ENCODE measurements at regions of chr9 and their contacts with region 1.

Region 1: DNA sequence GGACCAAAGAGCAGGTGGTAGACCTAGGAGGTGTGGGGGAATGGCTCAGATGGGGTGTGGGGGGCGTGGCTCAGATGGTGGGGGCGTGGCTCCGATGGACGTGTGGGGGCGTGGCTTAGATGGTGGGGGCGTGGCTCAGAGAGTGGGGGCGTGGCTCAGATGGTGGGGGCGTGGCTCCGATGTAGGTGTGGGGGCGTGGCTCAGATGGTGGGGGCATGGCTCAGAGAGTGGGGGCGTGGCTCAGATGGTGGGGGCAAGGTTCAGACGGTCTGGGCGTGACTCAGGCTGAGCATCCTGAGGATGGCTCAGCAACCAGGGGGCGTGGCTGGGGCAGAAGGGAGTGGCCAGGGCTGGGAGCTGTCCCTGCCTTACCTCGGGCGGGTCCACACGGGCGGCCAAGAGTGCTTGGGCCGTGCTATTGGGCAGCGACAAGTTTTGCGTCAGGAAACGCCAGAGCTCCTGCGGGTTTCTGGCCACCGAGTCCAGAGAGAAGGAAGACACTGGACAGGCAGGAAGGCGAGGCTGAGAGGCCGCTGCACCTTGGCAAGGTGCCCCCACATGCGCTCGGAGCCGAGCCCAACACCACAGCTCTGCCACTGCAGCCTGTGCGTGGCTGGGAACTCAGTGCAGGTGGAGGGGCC is 5.9 kb downstream of the ABCA2 start:
- DNase-seq: peak; percentile 93
- ATAC-seq: peak; percentile 97
- H3K4me3 Mint-ChIP-seq: no peak overlapping the region
- H3K27ac Mint-ChIP-seq: no peak overlapping the region
- H3K4me1 Mint-ChIP-seq: peaks cover 3% of the 10 kb centered on the region
- H3K27me3 Mint-ChIP-seq: no peaks in the 10 kb centered on the region

Region 2: DNA sequence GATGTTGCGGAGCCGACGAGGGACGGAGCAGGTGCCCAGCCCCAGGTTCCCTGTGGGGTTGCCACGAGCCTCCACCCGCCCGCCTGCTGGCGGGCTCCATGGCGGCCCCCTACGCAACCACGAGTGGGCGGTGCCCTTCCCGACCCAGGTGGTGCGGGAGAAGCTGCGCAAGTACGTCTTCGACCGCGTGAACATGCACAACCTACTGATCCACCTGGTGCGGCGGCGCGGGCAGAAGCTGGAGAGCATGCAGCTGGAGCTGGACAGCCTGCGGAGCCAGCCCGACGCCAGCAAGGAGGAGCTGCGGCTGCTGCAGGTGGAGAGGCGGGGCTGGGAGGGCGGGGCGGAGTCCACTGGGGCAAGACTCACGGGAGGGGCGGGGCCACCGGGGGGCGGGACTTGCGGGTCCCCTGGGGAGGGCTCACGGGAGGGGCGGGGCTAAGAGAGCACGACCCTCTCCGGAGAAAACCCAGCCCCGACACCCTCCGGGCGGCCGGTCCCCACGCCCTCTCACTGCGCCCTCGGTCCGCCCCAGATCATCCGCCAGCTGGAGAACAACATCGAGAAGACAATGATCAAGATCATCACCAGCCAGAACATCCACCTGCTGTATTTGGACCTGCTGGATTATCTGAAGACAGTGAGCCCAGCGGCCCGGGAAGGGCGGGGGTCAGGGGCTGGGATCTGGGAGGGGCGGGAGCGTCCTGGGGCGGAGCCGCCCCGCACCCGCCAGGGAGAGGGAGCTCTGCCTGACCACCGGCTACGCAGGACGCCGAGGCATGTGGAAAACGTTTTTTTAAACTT is 222.0 kb before region 1 on chr9:
- CTCF ChIA-PET with region 1: no interaction called
- POLR2A ChIA-PET with region 1: no interaction called
- intact Hi-C with region 1: loop called in 1 of 2 experiments (anchors 1 kb)
- DNase-seq: peak; percentile 95
- ATAC-seq: peak; percentile 79
- H3K4me3 Mint-ChIP-seq: peak overlapping the region; percentile 72
- H3K27ac Mint-ChIP-seq: no peak overlapping the region
- H3K4me1 Mint-ChIP-seq: peaks cover 21% of the 10 kb centered on the region
- H3K27me3 Mint-ChIP-seq: peaks cover 4% of the 10 kb centered on the region